Colonic mucosa (tissue), 4 donors: ENCODE measurements at regions of chr21 and their contacts with region 1.

Region 1: GRCh38 chr21:45439161-45439872 is 34.4 kb downstream of the COL18A1 start:
- DNase-seq: peak; percentile 86
- H3K4me3 ChIP-seq: peak overlapping the region; percentile 30
- H3K27ac ChIP-seq: peak overlapping the region; percentile 51
- H3K4me1 ChIP-seq: no peaks in the 10 kb centered on the region
- H3K27me3 ChIP-seq: no peaks in the 10 kb centered on the region
- CTCF ChIP-seq: peak; percentile 95

Region 2: GRCh38 chr21:45140346-45140940 is 298.9 kb before region 1 on chr21:
- intact Hi-C with region 1: loop called (anchors 2 kb)
- DNase-seq: peak; percentile 74
- H3K4me3 ChIP-seq: no peak overlapping the region
- H3K27ac ChIP-seq: no peak overlapping the region
- H3K4me1 ChIP-seq: no peaks in the 10 kb centered on the region
- H3K27me3 ChIP-seq: no peaks in the 10 kb centered on the region
- CTCF ChIP-seq: peak; percentile 76

Region 3: DNA sequence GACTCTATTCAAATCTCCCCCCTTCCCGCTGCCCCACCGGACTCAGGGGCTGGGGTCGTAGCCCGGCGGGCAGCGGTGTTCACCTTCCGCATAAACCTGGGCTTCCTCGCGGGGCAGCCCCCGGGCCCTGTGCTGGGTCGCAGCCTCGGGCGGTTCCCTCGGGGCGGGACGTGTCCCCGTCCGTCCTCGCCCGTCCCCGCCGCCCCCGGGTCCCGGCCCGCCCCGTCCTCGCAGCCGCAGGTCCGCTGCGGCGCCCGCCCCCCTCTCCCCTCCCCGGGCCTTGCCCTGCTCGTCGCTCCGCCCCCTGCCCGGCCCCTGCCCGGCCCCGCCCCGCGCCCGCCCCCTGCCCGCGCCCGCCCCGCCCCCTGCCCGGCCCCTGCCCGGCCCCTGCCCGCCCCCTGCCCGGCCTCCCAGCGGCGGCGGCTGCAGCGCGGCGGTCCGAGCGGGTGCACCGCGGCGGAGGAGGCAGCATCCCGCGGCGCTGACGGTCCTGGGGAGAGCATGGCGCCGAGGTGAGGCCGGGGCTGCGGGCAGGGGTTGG is 34.5 kb before region 1 on chr21 and contains the start of gene COL18A1:
- intact Hi-C with region 1: no loop called
- DNase-seq: no peak
- H3K4me3 ChIP-seq: peak within 1 kb of the TSS; percentile 43
- H3K27ac ChIP-seq: peak within 1 kb of the TSS; percentile 40
- H3K4me1 ChIP-seq: no peaks in the 10 kb centered on the region
- H3K27me3 ChIP-seq: peaks cover 21% of the 10 kb centered on the region
- CTCF ChIP-seq: no peak
- total RNA-seq, gene COL18A1: 8.4 to 22.3 TPM